WTC11 (cell line): ENCODE measurements at regions of chr16 and their contacts with region 1.

Region 1: DNA sequence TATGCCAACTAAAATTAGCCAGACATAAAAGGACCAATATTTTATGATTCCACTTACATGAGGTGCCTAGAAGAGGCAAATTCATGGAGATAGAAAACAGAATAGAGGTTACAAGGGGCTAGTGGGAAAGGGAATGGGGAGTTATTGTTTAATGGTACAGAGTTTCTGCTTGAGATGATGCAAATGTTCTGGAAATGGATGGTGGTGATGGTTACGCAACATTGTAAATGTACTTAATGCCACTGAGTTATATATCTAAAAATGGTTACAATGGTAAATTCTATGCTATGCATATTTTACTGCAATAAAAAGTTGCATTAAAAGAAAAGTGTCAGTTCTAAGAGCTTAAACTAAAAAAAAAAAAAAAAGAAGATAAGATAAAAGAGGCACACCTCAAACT is 17.9 kb downstream of the MT1X start:
- DNase-seq: no peak
- ATAC-seq: no peak
- H3K4me3 Mint-ChIP-seq: no peak overlapping the region
- H3K27ac Mint-ChIP-seq: no peak overlapping the region
- H3K4me1 Mint-ChIP-seq: peaks cover 17% of the 10 kb centered on the region
- H3K27me3 Mint-ChIP-seq: peaks cover 2% of the 10 kb centered on the region
- CTCF ChIP-seq: no peak

Region 2: GRCh38 chr16:56547120-56547948 is 152.9 kb before region 1 on chr16:
- CTCF ChIA-PET with region 1: interaction called, 16 read pairs
- POLR2A ChIA-PET with region 1: no interaction called
- DNase-seq: peak; percentile 32
- ATAC-seq: peak; percentile 90
- H3K4me3 Mint-ChIP-seq: peak overlapping the region; percentile 58
- H3K27ac Mint-ChIP-seq: peak overlapping the region; percentile 98
- H3K4me1 Mint-ChIP-seq: peaks cover 34% of the 10 kb centered on the region
- H3K27me3 Mint-ChIP-seq: no peaks in the 10 kb centered on the region; the same call in 1 of the 2 replicates
- CTCF ChIP-seq: no peak

Region 3: DNA sequence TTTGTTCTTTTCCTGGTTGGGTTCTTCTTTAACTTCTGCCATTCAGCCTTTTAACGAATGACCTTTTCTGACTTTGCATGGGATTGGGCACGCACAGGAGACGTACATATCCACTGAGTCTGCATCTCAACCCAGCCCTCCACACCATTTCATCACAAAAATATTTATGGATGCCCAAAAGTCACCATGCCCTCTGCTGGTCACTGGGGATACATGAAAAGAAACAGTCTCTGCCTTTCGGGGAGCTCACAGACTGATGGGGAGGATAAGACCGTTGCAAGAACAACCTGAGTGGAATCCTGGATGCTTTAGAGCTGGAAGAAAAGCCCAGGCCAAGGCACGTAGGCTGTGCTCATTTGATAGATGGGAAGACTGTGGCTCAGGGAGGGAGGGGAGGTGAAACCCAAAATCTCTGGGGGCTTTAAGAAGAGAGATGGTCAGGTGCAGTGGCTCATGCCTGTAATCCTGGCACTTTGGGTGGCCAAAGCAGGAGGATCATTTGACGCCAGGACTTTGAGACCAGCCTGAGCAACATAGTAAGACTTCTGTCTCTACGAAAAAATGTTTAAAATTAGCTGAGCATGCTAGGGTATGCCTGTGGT is 99.7 kb before region 1 on chr16:
- CTCF ChIA-PET with region 1: interaction called, 39 read pairs
- POLR2A ChIA-PET with region 1: no interaction called
- DNase-seq: peak; percentile 31
- ATAC-seq: peak; percentile 73
- H3K4me3 Mint-ChIP-seq: no peak overlapping the region
- H3K27ac Mint-ChIP-seq: no peak overlapping the region
- H3K4me1 Mint-ChIP-seq: no peaks in the 10 kb centered on the region; the same call in 1 of the 2 replicates
- H3K27me3 Mint-ChIP-seq: peaks cover 22% of the 10 kb centered on the region
- CTCF ChIP-seq: 0 out of 2 replicates have a peak, but pooled peaks have one; percentile 24

Region 4: GRCh38 chr16:56643080-56643778 is 57.0 kb before region 1 on chr16:
- CTCF ChIA-PET with region 1: interaction called, 15 read pairs
- POLR2A ChIA-PET with region 1: interaction called, 8 read pairs
- DNase-seq: peak; percentile 63
- ATAC-seq: peak; percentile 80
- H3K4me3 Mint-ChIP-seq: peak overlapping the region; percentile 63
- H3K27ac Mint-ChIP-seq: no peak overlapping the region
- H3K4me1 Mint-ChIP-seq: peaks cover 22% of the 10 kb centered on the region
- H3K27me3 Mint-ChIP-seq: peaks cover 100% of the 10 kb centered on the region
- CTCF ChIP-seq: no peak

Region 5: GRCh38 chr16:56673921-56674320 is 26.3 kb before region 1 on chr16:
- CTCF ChIA-PET with region 1: interaction called, 46 read pairs
- POLR2A ChIA-PET with region 1: interaction called, 10 read pairs
- DNase-seq: no peak
- ATAC-seq: peak; percentile 24
- H3K4me3 Mint-ChIP-seq: peak overlapping the region; percentile 7; the same call in 1 of the 2 replicates
- H3K27ac Mint-ChIP-seq: peak overlapping the region; percentile 73
- H3K4me1 Mint-ChIP-seq: peaks cover 59% of the 10 kb centered on the region
- H3K27me3 Mint-ChIP-seq: peaks cover 55% of the 10 kb centered on the region
- CTCF ChIP-seq: no peak

Region 6: DNA sequence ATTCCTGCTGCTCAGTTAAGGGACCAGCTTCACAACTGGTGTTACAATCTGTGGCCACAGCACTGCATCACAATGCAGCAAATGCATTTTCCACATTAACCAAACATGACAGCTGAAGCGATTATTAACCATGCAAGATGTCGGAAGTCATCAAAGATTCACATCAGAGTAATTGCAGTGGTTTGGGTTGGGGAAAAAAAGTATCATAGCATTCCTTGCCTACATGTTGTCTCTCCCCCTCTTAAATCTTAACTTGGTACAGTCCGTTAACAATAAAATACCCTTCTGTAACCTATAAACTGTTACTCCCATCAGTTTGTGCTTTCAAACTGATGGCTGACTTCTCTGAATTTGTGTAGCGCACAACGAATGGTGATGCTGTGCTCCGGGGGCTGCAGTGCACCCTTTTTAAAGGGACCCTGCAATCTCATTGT is 81.3 kb after region 1 on chr16:
- CTCF ChIA-PET with region 1: interaction called, 15 read pairs
- POLR2A ChIA-PET with region 1: no interaction called
- DNase-seq: no peak
- ATAC-seq: peak; percentile 14; the same call in 1 of the 2 replicates
- H3K4me3 Mint-ChIP-seq: peak overlapping the region; percentile 47
- H3K27ac Mint-ChIP-seq: peak overlapping the region; percentile 91
- H3K4me1 Mint-ChIP-seq: peaks cover 80% of the 10 kb centered on the region
- H3K27me3 Mint-ChIP-seq: no peaks in the 10 kb centered on the region
- CTCF ChIP-seq: no peak